Activated B cell treated with CpG ODN at 0.5 μM for 24 hours (primary cell): ENCODE measurements at regions of chr1 and their contacts with region 1.

Region 1: DNA sequence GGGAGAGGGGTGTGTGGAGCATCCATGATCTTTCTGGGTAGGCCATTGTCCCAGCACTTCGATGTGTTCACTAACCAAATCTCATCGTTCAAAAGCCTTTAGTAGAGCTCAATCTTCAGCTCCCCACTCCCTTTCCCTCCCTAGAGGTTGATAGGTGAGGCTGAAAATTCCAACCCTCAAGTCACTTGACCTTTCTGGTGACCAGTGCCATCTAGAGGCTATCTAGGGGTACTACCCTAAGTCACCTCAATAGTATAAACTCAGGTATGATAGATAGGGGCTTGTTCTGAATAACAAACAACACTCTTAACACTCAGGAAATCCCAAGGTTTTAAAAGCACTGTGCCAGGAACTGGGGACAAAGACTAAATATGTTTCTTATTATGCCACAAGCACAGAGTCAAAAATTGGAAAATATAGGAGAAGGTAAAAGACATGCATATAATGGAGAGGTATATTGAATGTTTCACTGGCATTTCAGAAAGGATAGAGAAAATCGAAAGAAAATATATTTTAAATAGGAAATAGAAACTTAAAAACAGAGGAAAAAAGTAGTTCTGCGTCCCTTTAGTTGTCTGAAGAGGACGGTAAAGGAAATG is 42.9 kb upstream of the CD53 start:
- DNase-seq: no peak
- ATAC-seq: peak; percentile 92
- H3K4me3 Mint-ChIP-seq: no peak overlapping the region
- H3K27ac Mint-ChIP-seq: no peak overlapping the region
- H3K4me1 Mint-ChIP-seq: peaks cover 34% of the 10 kb centered on the region
- H3K27me3 Mint-ChIP-seq: no peaks in the 10 kb centered on the region
- CTCF ChIP-seq: peak; percentile 97

Region 2: DNA sequence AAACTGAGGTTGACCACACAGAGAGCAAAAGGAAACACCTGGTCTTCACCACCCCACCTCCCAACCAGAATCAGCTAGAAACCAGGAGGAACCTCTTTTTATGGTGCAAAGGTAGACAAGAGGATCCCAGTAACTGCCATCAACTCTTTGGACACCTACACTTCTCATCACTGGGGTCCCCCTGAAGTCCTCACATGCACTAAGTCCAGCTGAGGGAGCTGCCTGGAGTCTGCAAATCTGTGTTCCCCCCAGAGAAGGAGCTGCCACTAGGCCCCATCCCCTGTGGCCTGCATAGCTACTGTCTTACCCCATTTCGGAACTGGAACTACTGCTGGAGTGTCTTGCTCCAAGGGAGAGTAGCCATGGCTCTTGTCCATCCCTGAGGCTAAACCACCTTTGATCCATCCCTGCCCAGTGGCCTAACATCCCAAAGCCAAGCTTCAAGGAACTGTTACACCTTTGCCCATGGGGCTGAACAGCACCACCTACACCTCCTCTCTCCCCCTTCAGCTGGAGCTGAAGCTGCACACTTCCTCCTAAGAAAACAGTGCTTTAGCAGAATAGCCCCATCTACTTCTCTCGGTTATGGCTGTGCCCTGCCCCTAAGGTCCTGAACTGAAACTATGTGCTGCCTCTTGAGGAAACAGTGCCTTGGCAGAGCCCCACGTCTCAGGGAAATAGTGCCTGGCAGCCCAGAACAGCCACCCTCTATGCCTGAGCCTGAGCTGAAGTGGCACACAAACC is 42.6 kb before region 1 on chr1:
- CTCF ChIA-PET with region 1: interaction called, 40 read pairs
- POLR2A ChIA-PET with region 1: interaction called, 4 read pairs
- intact Hi-C with region 1: loop called (anchors 1 kb)
- DNase-seq: peak; percentile 49
- ATAC-seq: peak; percentile 85
- H3K4me3 Mint-ChIP-seq: peak overlapping the region; percentile 70
- H3K27ac Mint-ChIP-seq: peak overlapping the region; percentile 95
- H3K4me1 Mint-ChIP-seq: peaks cover 70% of the 10 kb centered on the region
- H3K27me3 Mint-ChIP-seq: no peaks in the 10 kb centered on the region
- CTCF ChIP-seq: no peak

Region 3: GRCh38 chr1:110816930-110817329 is 13.1 kb before region 1 on chr1:
- CTCF ChIA-PET with region 1: interaction called, 11 read pairs
- POLR2A ChIA-PET with region 1: no interaction called
- intact Hi-C with region 1: no loop called
- DNase-seq: no peak
- ATAC-seq: no peak
- H3K4me3 Mint-ChIP-seq: no peak overlapping the region
- H3K27ac Mint-ChIP-seq: no peak overlapping the region
- H3K4me1 Mint-ChIP-seq: peaks cover 4% of the 10 kb centered on the region
- H3K27me3 Mint-ChIP-seq: no peaks in the 10 kb centered on the region
- CTCF ChIP-seq: no peak

Region 4: DNA sequence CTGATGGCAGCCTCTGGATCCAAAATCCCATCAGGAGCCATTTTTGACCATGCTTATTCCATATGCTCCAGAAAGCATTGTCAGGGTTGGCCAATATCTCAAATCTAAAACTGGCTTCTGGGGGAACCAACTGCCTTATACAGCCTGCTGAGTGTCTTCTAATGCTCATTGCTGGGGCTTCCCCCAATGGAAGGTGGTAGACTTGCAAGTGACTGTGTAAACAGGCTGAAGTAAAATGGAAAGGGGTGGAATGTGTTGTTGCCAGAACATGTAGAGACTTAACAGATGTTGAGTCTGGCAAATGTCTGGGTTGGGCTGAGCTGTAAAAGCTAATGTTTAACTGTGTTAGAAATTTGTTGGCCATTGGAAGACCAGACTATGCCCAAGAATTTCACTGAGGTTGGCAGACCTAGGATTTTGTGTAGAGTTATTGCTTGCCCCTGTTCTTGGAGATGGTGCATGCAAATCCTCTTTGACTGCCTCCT is 156.4 kb after region 1 on chr1:
- CTCF ChIA-PET with region 1: no interaction called
- POLR2A ChIA-PET with region 1: no interaction called
- intact Hi-C with region 1: loop called (anchors 5 kb)
- DNase-seq: no peak
- ATAC-seq: no peak
- H3K4me3 Mint-ChIP-seq: no peak overlapping the region
- H3K27ac Mint-ChIP-seq: no peak overlapping the region
- H3K4me1 Mint-ChIP-seq: peaks cover 6% of the 10 kb centered on the region
- H3K27me3 Mint-ChIP-seq: peaks cover 11% of the 10 kb centered on the region
- CTCF ChIP-seq: no peak

Region 5: DNA sequence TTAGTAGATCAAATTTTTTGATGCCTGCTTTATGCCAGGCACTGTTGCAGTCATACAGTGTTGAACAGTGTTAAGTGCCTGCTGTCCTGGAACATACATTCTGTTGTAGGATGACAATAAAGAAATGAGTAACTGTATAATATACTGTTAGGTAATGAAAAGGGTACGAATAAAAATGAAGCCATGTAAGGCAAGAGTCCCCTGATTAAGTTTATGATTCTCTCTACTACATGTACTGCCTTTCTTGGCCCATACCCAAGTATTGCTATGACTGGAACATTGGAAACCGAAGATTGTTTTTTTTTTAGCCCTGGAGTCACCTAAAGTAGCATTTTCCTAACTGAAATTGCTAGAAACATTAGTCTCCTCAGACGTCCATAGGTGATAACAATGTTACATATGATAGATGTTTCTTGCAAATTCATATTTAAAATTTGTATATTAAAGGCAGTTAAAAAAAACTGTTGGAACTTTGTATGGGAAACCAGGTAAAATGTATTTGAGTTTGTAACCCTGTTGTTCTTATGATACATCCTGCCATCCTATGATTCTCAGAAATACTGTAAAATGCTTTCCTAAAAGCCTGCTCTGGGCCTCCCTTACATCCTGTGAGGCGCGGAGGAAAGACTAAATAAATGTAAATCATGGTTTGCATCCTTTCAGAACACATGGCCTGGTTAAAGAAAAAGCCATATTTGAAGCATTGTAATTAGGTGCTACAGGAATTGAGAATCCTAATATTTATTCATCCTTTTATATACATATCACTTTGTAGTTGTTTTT is 625.0 kb after region 1 on chr1:
- CTCF ChIA-PET with region 1: no interaction called
- POLR2A ChIA-PET with region 1: no interaction called
- intact Hi-C with region 1: no loop called
- DNase-seq: no peak
- ATAC-seq: peak; percentile 28
- H3K4me3 Mint-ChIP-seq: no peak overlapping the region
- H3K27ac Mint-ChIP-seq: no peak overlapping the region
- H3K4me1 Mint-ChIP-seq: peaks cover 55% of the 10 kb centered on the region
- H3K27me3 Mint-ChIP-seq: no peaks in the 10 kb centered on the region
- CTCF ChIP-seq: no peak